ENCODE measurements at regions of chr10 and their contacts with region 1.

Region 1: GRCh38 chr10:126670895-126671261 is 385 bp upstream of the C10orf90 start:
- DNase-seq: no peak
- H3K4me3 ChIP-seq: no peak overlapping the region
- H3K27ac ChIP-seq: no peak overlapping the region
- H3K4me1 ChIP-seq: no peaks in the 10 kb centered on the region
- H3K27me3 ChIP-seq: no peaks in the 10 kb centered on the region
- CTCF ChIP-seq: no peak
- POLR2A ChIP-seq: no peak

Region 2: GRCh38 chr10:126892226-126893175 is 221.6 kb after region 1 on chr10:
- intact Hi-C with region 1: loop called in 1 of 2 experiments (anchors 5 kb)
- DNase-seq: peak in 1 of 7 donors; percentile 6
- H3K4me3 ChIP-seq: no peak overlapping the region
- H3K27ac ChIP-seq: no peak overlapping the region
- H3K4me1 ChIP-seq: no peaks in the 10 kb centered on the region
- H3K27me3 ChIP-seq: no peaks in the 10 kb centered on the region
- CTCF ChIP-seq: no peak
- POLR2A ChIP-seq: no peak

Measured in adrenal gland (tissue), 19 donors.